Heart left ventricle (tissue), 16 donors: ENCODE measurements at regions of chr16 and their contacts with region 1.

Region 1: GRCh38 chr16:15440852-15441251 is 6.5 kb downstream of the BMERB1 start:
- DNase-seq: no peak
- ATAC-seq: peak in 1 of 4 donors; percentile 45
- H3K4me3 ChIP-seq: no peak overlapping the region
- H3K27ac ChIP-seq: peak overlapping the region in 1 of 12 donors; percentile 44
- H3K4me1 ChIP-seq: peaks cover 0 to 22% (median 0%) of the 10 kb centered on the region in 12 donors
- H3K27me3 ChIP-seq: peaks cover 0 to 6% (median 0%) of the 10 kb centered on the region in 9 donors
- CTCF ChIP-seq: no peak
- POLR2A ChIP-seq: no peak

Region 2: DNA sequence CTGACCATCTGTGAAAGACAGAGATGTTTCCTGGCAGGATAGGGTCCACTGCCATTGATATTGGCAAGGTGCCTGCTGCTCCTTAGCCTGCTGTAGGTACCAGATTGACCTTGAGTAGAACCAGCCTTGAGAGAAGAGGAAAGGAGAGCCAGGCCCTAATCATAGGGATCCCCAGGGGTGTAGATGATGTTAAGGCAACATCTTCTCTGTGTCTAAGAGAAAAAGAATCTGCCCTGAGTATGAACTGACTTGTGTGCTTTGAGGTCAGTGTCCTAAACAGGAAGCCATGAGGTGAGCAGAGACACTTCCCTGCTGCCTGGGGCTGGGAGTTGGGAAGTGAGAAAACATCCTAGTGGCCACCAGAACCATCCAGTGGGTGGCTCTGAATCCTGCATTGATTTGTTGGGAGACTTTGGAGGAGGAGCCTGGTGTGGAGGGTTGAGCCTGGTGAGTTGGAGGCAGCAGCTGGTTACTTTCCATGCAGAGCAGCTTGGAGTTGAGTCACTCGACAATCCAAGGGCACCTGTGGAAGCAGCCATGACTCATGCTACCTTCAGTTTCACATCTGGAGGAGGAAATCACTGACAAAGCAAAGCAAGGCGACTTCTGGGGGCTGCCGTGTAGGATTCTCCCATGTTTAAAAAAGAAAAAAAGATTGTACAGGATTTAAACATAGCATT is 41.4 kb after region 1 on chr16:
- intact Hi-C with region 1: loop called in 2 of 10 experiments (anchors 5 to 10 kb)
- DNase-seq: peak in 4 of 5 donors; percentile 46 to 68 (median 48)
- ATAC-seq: peak; percentile 26 to 95 (median 90)
- H3K4me3 ChIP-seq: no peak overlapping the region
- H3K27ac ChIP-seq: peak overlapping the region in 3 of 12 donors; percentile 1 to 37 (median 13)
- H3K4me1 ChIP-seq: peaks cover 0 to 13% (median 1%) of the 10 kb centered on the region in 12 donors
- H3K27me3 ChIP-seq: no peaks in the 10 kb centered on the region
- CTCF ChIP-seq: no peak
- POLR2A ChIP-seq: no peak

Region 3: GRCh38 chr16:15498427-15499175 is 57.7 kb after region 1 on chr16:
- intact Hi-C with region 1: no loop called
- DNase-seq: no peak
- ATAC-seq: peak in 1 of 4 donors; percentile 48
- H3K4me3 ChIP-seq: no peak overlapping the region
- H3K27ac ChIP-seq: peak overlapping the region in 1 of 12 donors; percentile 13
- H3K4me1 ChIP-seq: peaks cover 0 to 14% (median 6%) of the 10 kb centered on the region in 12 donors
- H3K27me3 ChIP-seq: no peaks in the 10 kb centered on the region
- CTCF ChIP-seq: no peak
- POLR2A ChIP-seq: no peak